ENCODE measurements at regions of chr16 and their contacts with region 1.

Region 1: DNA sequence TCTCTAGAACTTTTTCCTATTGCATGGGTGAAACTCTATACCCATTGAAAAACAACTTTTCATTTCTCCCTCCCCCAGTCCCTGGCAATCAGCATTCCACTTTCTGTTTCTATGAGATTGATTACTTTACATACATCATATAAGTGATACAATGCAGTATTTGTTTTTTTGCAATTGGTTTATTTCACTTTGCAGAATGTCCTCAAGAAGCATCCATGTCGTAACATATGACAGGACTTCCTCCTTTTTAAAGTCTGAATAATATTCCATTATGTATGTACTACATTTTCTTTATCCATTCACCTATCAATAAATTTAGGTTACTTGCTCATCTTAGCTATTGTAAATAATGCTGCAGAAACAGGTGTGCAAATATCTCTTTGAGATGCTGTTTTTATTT is 8.8 kb downstream of the IL21R start:
- DNase-seq: no peak
- H3K4me3 ChIP-seq: no peak overlapping the region
- H3K27ac ChIP-seq: no peak overlapping the region
- H3K4me1 ChIP-seq: no peaks in the 10 kb centered on the region
- H3K27me3 ChIP-seq: peaks cover 42% of the 10 kb centered on the region
- CTCF ChIP-seq: no peak

Region 2: GRCh38 chr16:26840691-26841090 is 570.1 kb before region 1 on chr16:
- CTCF ChIA-PET with region 1: no interaction called
- POLR2A ChIA-PET with region 1: interaction called, 10 read pairs
- intact Hi-C with region 1: no loop called
- DNase-seq: no peak
- H3K4me3 ChIP-seq: no peak overlapping the region
- H3K27ac ChIP-seq: no peak overlapping the region
- H3K4me1 ChIP-seq: no peaks in the 10 kb centered on the region
- H3K27me3 ChIP-seq: peaks cover 43% of the 10 kb centered on the region
- CTCF ChIP-seq: no peak

Region 3: GRCh38 chr16:27529962-27530361 is 119.2 kb after region 1 on chr16:
- CTCF ChIA-PET with region 1: no interaction called
- POLR2A ChIA-PET with region 1: no interaction called
- intact Hi-C with region 1: no loop called
- DNase-seq: no peak
- H3K4me3 ChIP-seq: no peak overlapping the region
- H3K27ac ChIP-seq: no peak overlapping the region
- H3K4me1 ChIP-seq: no peaks in the 10 kb centered on the region
- H3K27me3 ChIP-seq: no peaks in the 10 kb centered on the region
- CTCF ChIP-seq: no peak

Region 4: DNA sequence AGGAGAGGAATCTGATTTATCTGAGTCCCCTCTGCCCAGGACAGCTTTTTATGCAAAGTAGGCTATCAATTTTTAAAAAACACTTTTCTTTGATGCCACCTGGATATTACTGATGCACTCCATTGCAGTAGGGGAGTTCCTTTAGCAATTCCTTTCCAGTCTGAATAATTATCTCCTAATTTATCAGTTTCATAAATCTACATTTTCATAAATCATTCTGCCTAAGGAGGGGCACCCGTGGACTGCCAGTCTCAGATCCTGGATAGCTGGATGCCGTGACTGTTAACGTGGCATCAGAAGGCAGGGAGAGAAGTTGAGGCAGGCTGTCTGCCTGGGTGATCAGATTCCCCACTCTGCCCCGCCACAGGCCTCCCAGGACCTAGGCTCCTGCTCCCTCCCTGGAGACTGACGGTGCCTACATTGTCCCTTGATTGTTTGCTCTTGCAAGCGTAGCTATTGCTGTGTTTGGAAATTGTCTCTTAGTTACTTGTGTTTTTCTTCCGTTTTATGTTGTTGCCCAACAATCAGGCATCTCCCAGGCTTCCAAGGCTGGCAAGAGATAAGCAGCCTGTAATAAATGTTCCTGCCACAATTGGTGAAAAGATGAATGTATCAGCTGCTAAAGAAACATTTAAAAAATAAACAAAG is 214.4 kb after region 1 on chr16:
- CTCF ChIA-PET with region 1: no interaction called
- POLR2A ChIA-PET with region 1: no interaction called
- intact Hi-C with region 1: no loop called
- DNase-seq: peak in 1 of 2 experiments; percentile 58
- H3K4me3 ChIP-seq: no peak overlapping the region
- H3K27ac ChIP-seq: no peak overlapping the region
- H3K4me1 ChIP-seq: no peaks in the 10 kb centered on the region
- H3K27me3 ChIP-seq: no peaks in the 10 kb centered on the region
- CTCF ChIP-seq: no peak

Measured in PC-9 (cell line).